A549 (cell line): ENCODE measurements at regions of chr15 and their contacts with region 1.

Region 1: GRCh38 chr15:65869127-65869953 is at the start of gene RAB11A:
- DNase-seq: peak; percentile 96 to 99
- ATAC-seq: peak; percentile 93 to 96
- H3K4me3 ChIP-seq: peak within 1 kb of the TSS; percentile 86
- H3K27ac ChIP-seq: peak within 1 kb of the TSS; percentile 91 to 94
- H3K4me1 ChIP-seq: peaks cover 26% of the 10 kb centered on the region
- CTCF ChIP-seq: peak; percentile 35; the same call in 1 of the 3 replicates
- EP300 ChIP-seq: no peak
- POLR2A ChIP-seq: peak; percentile 91
- RAD21 ChIP-seq: peak; percentile 15 to 44; a peak in 3 of 5 replicates
- polyA plus RNA-seq, gene RAB11A: 527 and 551 TPM in 2 replicates

Region 2: DNA sequence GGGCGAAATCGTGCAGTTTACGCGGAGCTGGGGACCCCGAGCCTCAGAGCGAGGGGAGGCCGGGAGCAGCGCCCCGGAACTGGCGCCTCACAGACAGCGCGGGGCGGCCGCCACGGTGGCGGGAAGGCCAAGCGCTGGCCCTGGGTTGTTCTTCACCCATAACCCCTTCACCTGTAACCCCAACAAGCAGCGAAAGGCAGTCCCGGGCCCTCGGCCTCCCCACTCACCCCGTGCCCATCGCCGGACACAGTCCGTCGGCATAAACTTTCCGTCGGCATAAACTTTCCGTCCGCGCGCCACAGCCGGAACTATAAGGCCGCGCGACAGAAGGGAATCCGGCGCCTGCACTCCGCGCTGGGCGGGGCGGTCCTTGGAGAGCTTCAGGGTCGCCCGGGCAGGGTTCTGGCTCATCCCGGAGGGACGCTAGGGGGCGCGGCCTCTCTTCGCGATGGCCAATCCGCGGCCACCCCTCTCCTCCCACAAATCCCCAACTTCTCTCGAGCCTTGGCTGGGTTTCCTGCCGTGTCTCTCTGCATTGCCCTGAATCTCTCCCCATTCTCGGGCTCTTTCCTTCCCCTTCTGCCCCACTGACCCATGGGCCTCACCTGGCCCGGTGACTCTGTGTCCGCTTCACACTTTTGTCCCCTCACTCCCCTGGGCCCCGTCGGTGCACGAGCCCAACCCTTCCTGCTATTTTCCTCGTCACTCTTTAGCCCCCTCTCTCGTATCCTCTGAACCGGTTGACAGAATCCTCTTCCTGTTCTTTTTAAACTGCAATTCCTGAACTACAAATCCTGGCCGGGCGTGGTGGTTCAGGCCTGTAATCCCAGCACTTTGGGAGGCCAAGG is 258.2 kb before region 1 on chr15 and contains the start of gene INTS14:
- CTCF ChIA-PET with region 1: interaction called, 14 read pairs
- POLR2A ChIA-PET with region 1: interaction called, 62 read pairs
- DNase-seq: peak; percentile 97 to 99
- ATAC-seq: peak; percentile 97 to 99
- H3K4me3 ChIP-seq: peak within 1 kb of the TSS; percentile 83
- H3K27ac ChIP-seq: peak within 1 kb of the TSS; percentile 93 to 94
- H3K4me1 ChIP-seq: peaks cover 18% of the 10 kb centered on the region
- CTCF ChIP-seq: peak; percentile 81
- EP300 ChIP-seq: no peak
- POLR2A ChIP-seq: peak; percentile 86
- RAD21 ChIP-seq: peak; percentile 59 to 82
- polyA plus RNA-seq, gene INTS14: 81.4 and 82.1 TPM in 2 replicates

Region 3: GRCh38 chr15:65730549-65731172 is 138.7 kb before region 1 on chr15:
- CTCF ChIA-PET with region 1: no interaction called
- POLR2A ChIA-PET with region 1: no interaction called
- DNase-seq: peak in 1 of 2 experiments; percentile 10
- ATAC-seq: peak in 1 of 2 experiments; percentile 50; a peak in 1 of 6 replicates
- H3K4me3 ChIP-seq: no peak overlapping the region
- H3K27ac ChIP-seq: peak overlapping the region; percentile 36 to 46; a peak in 3 of 6 replicates
- H3K4me1 ChIP-seq: peaks cover 12% of the 10 kb centered on the region; the same call in 2 of the 3 replicates
- CTCF ChIP-seq: no peak
- EP300 ChIP-seq: no peak
- POLR2A ChIP-seq: no peak
- RAD21 ChIP-seq: no peak

Region 4: GRCh38 chr15:65792130-65792987 is 77.0 kb before region 1 on chr15 and contains the start of gene DENND4A:
- CTCF ChIA-PET with region 1: interaction called, 5 read pairs
- POLR2A ChIA-PET with region 1: interaction called, 30 read pairs
- DNase-seq: peak; percentile 91 to 99
- ATAC-seq: peak; percentile 86 to 92
- H3K4me3 ChIP-seq: peak within 1 kb of the TSS; percentile 72
- H3K27ac ChIP-seq: peak within 1 kb of the TSS; percentile 77 to 89
- H3K4me1 ChIP-seq: peaks cover 38% of the 10 kb centered on the region
- CTCF ChIP-seq: no peak
- EP300 ChIP-seq: no peak
- POLR2A ChIP-seq: peak; percentile 93
- RAD21 ChIP-seq: no peak
- polyA plus RNA-seq, gene DENND4A: 16.8 and 18.7 TPM in 2 replicates

Region 5: DNA sequence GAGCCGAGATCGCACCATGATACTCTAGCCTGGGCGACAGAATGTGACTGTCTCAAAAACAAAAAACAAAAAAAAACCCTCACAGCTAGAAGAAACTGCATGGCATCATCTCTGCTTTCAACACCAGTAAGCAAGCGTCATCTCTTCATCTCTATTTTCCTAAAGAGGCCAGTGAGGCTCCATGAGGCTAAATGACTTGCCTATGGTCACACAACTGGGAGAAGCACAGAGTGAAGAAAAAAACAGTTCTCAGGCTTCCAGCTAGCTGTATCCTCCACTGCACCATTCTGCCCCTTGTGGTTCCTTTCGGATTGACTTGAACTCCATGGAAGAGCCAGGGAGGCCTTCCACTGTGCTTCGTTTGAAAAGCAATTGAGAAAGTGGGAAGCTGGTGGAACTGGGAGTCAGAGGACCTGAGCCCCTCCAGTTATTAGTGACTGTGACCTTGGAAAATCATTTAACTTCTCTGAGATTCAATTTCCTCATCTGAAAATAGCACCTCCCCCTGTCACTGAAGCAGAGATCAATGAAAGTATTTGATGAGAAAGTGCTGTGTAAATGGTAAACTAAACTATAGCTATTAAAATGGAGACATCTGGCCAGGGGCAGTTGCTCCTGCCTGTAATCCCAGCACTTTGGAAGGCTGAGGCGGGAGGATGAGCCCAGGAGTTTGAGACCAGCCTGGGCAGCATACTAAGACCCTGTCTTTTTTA is 45.2 kb before region 1 on chr15:
- CTCF ChIA-PET with region 1: interaction called, 13 read pairs
- POLR2A ChIA-PET with region 1: interaction called, 17 read pairs
- DNase-seq: peak; percentile 82 to 88
- ATAC-seq: peak; percentile 98 to 99
- H3K4me3 ChIP-seq: no peak overlapping the region
- H3K27ac ChIP-seq: peak overlapping the region in 1 of 2 experiments; percentile 11; a peak in 2 of 6 replicates
- H3K4me1 ChIP-seq: peaks cover 27% of the 10 kb centered on the region
- CTCF ChIP-seq: peak; percentile 70
- EP300 ChIP-seq: no peak
- POLR2A ChIP-seq: no peak
- RAD21 ChIP-seq: peak; percentile 68 to 72

Region 6: DNA sequence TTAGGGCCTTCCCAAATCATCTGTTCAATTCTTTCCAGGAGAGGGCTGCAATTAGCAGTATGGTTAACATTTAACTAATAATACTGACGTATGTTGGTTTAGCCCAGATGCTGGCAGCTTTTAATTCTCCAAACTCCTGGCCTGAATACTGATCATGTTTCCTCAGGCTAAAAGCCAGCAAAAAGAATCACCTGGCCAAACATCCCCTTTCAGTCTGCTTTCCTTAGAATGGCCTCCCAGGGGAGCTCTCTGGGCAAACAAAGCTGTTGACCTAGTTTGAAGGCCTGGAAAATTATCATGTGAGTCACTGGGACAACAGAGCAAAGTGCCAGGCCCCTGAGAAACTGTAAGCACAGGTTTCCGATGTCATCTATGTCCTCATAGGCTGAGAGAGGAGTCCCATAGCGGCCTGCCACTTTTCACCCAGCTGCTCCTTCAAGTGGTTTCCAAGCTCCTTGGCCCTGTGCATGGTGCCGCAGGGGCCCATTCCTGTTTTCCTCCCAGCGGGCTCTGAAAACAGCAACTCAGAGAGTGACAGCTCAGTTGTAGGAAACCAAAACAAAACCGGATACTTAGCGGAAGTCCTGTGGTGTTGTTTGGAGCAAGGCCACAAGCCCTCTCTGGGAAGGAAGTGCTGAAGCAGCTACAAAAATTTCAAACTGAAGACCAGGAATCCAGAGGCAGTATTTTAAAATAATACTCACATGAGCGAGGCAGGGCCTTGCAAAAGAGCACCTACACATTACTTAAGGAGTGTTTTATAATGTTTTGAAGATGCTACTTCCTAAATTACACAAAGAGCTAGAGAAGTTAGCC is 36.6 kb before region 1 on chr15:
- CTCF ChIA-PET with region 1: interaction called, 29 read pairs
- POLR2A ChIA-PET with region 1: interaction called, 62 read pairs
- DNase-seq: peak; percentile 99
- ATAC-seq: peak; percentile 97
- H3K4me3 ChIP-seq: peak overlapping the region; percentile 9; the same call in 2 of the 3 replicates
- H3K27ac ChIP-seq: peak overlapping the region; percentile 59 to 74
- H3K4me1 ChIP-seq: peaks cover 48% of the 10 kb centered on the region
- CTCF ChIP-seq: peak; percentile 26; the same call in 2 of the 3 replicates
- EP300 ChIP-seq: peak; percentile 73 to 82; a peak in 3 of 5 replicates
- POLR2A ChIP-seq: no peak
- RAD21 ChIP-seq: peak; percentile 28 to 67; a peak in 4 of 5 replicates

Region 7: DNA sequence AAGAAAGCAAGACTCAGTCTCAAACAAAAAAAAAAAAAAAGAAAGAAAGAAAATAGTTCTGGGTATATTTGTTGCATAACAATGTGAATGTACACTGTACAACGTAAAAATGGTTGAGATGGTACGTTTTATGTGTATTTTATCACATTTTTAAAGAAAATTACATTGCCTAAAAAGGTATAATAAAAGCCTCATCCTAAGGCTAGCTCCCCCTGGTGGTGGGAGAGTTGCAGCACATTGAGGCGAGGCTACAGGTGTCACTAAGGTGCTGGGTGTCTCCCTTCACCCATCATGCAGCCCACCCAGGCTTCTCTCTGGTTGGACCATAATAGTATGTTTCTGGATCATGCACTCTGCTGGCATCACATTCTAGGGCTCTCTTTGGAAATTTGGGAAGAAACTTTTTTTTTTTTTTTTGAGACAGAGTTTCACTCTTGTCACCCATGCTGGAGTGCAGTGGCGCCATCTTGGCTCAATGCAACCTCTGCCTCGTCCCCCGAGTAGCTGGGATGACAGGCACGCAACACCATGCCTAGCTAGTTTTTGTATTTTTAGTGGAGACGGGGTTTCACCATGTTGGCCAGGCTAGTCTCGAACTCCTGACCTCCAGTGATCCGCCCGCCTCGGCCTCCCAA is 12.4 kb before region 1 on chr15:
- CTCF ChIA-PET with region 1: interaction called, 80 read pairs
- POLR2A ChIA-PET with region 1: interaction called, 13 read pairs
- DNase-seq: peak; percentile 57 to 77
- ATAC-seq: peak; percentile 89 to 90
- H3K4me3 ChIP-seq: no peak overlapping the region
- H3K27ac ChIP-seq: no peak overlapping the region
- H3K4me1 ChIP-seq: no peaks in the 10 kb centered on the region
- CTCF ChIP-seq: peak; percentile 92
- EP300 ChIP-seq: no peak
- POLR2A ChIP-seq: no peak
- RAD21 ChIP-seq: peak; percentile 55 to 56; a peak in 4 of 5 replicates

Region 8: DNA sequence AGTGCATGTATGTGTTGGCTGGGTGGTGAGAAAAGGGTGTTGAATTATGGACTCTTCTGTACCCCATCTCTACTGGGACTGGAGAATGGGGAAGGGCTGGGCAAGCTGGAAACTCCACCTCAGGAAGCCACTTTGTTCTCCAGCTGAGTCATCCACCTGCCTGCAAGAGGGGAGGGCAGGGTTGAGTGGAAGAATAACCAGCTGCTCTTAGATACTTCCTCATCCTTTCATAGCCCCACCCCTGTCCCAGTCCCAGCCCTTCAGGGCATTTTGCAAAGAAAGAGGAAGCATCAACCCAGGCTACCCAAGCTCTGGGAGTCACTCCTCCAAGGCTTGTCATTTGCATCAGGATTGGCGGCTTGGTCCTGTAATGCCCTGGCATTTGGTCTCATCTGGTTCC is 33.0 kb after region 1 on chr15:
- CTCF ChIA-PET with region 1: interaction called, 11 read pairs
- POLR2A ChIA-PET with region 1: interaction called, 12 read pairs
- DNase-seq: peak; percentile 73 to 84
- ATAC-seq: peak; percentile 89 to 90
- H3K4me3 ChIP-seq: no peak overlapping the region
- H3K27ac ChIP-seq: peak overlapping the region; percentile 50 to 69
- H3K4me1 ChIP-seq: peaks cover 30% of the 10 kb centered on the region
- CTCF ChIP-seq: no peak
- EP300 ChIP-seq: no peak
- POLR2A ChIP-seq: no peak
- RAD21 ChIP-seq: no peak